OCI-LY7 (cell line): ENCODE measurements at regions of chr2 and their contacts with region 1.

Region 1: GRCh38 chr2:40363631-40364030 is 88.3 kb downstream of the SLC8A1 start:
- DNase-seq: peak; percentile 82
- H3K4me3 ChIP-seq: peak overlapping the region; percentile 58
- H3K27ac ChIP-seq: peak overlapping the region; percentile 92
- H3K4me1 ChIP-seq: peaks cover 67% of the 10 kb centered on the region
- CTCF ChIP-seq: no peak

Region 2: GRCh38 chr2:40127890-40128557 is 235.6 kb before region 1 on chr2:
- CTCF ChIA-PET with region 1: no interaction called
- POLR2A ChIA-PET with region 1: no interaction called
- intact Hi-C with region 1: no loop called
- DNase-seq: no peak
- H3K4me3 ChIP-seq: no peak overlapping the region
- H3K27ac ChIP-seq: no peak overlapping the region
- H3K4me1 ChIP-seq: peaks cover 27% of the 10 kb centered on the region
- CTCF ChIP-seq: no peak

Region 3: GRCh38 chr2:40346535-40347354 is 16.9 kb before region 1 on chr2:
- CTCF ChIA-PET with region 1: no interaction called
- POLR2A ChIA-PET with region 1: interaction called, 10 read pairs
- intact Hi-C with region 1: no loop called
- DNase-seq: no peak
- H3K4me3 ChIP-seq: no peak overlapping the region
- H3K27ac ChIP-seq: no peak overlapping the region
- H3K4me1 ChIP-seq: no peaks in the 10 kb centered on the region
- CTCF ChIP-seq: no peak

Region 4: DNA sequence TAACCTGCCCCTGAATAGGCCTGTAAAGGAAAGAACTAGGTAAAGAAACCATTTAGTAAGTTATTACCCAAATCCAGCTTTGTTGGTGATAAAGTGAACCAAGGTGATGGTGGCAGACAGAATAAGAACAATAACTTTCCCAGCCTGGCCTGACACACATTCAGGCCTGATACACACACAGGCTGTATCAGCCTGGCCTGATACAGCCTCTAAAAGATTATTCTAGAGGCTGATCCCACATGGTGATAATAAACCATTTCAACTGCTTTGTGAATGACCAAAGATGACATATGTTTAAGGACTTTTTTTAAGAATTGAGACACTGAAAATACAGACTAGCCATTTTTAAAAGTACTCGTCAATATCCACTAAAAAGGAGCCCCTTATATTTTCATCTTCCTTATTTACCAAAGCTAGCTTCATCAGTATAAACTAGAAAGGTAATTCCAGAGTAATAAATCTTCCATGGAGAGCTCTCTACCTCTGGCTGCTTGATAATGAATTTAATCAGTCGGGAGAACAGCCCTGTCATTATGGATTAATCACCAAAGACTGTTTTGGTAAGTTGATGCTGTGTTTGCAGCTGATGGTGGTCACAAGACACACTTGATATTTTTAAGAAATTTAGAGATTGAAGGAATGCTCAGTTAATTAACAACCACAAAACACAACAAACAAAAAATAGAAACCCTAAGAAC is 11.1 kb after region 1 on chr2:
- CTCF ChIA-PET with region 1: no interaction called
- POLR2A ChIA-PET with region 1: interaction called, 11 read pairs
- intact Hi-C with region 1: no loop called
- DNase-seq: no peak
- H3K4me3 ChIP-seq: no peak overlapping the region
- H3K27ac ChIP-seq: no peak overlapping the region
- H3K4me1 ChIP-seq: no peaks in the 10 kb centered on the region
- CTCF ChIP-seq: no peak

Region 5: DNA sequence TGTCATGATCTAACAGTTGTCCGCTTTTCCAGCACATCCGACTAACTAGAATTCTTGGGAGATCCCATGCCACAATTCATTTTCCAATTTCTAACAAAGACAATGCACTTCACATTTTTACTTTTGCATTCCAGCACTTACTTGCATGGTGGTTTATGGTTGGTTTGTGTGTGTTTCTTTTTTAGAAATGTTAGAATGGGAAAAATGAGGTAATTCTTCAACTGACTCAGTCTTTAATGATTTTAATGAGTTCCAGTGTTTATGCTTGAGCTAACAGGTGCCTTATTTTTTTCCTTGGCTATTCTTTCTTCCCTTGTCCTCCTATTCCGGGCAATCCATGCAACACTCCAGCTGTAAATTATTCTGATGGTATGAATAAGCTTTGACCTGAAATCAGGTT is 41.8 kb after region 1 on chr2:
- CTCF ChIA-PET with region 1: no interaction called
- POLR2A ChIA-PET with region 1: interaction called, 10 read pairs
- intact Hi-C with region 1: no loop called
- DNase-seq: no peak
- H3K4me3 ChIP-seq: no peak overlapping the region
- H3K27ac ChIP-seq: no peak overlapping the region
- H3K4me1 ChIP-seq: no peaks in the 10 kb centered on the region
- CTCF ChIP-seq: no peak